ENCODE measurements at regions of chr6 and their contacts with region 1.

Region 1: DNA sequence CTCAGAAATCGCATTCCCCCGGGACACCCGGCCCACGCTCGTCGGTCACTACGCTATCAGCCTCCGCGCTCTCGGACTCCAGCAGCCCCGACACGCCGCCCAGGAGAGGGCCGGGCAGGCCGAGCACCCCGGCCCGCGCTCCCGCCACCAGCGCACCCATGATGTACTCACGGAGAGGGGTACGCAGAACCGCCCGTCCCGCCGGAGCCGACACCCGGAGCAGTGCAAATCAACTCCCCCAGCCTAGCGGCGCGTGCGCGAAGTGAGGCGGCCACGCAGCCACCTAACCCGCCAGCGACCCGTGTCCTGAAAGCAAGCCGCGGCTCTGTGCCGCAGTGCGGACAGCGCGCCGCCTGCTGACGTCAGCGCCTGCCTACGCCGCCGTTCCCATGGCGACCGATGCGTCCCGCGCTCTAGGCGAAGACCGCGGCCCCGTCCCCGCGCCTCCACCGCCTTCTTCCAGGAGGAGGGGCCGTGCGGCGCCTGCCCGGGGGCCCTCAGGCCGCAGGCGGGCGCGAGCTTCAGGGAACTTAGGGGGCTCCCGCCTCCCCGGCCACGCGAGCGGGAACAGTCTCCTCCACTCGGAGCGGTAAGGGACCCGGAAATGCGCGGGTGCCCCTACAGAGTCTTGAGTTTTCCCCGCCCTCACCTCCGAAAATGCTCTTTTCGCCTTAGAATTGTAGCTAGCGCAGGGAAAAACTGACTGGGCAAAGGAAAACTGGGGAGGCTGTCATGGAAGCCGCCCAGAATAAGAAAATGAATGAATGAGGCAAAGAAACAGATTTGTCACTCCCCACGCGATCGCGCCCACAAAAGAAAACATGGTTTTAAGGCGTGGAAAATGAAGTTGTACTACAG is at the start of gene AHI1:
- DNase-seq: peak; percentile 89
- ATAC-seq: peak; percentile 75
- H3K4me3 Mint-ChIP-seq: no peak within 1 kb of the TSS
- H3K27ac Mint-ChIP-seq: no peak within 1 kb of the TSS
- H3K4me1 Mint-ChIP-seq: peaks cover 11% of the 10 kb centered on the region
- H3K27me3 Mint-ChIP-seq: no peaks in the 10 kb centered on the region
- CTCF ChIP-seq: peak; percentile 19
- total RNA-seq, gene AHI1: 32.1 to 33.3 TPM

Region 2: DNA sequence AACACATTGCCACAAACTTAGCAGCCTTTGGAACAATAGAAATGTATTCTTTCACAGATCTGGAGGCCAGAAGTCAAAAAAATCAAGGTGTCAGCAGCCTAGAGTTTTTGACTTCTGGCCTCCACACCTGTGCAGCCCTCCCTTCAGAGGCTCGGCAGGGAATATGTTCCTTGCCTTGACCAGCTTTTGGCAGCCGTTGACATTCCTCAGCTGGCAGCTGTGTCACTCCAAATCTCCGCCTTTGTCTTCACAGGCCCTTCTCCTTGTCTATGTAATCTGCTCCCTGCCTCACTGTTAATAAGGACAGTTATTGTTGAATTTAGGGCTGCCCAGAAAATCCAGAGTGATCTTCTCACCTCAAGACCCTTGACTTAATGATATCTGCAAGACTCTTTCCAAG is 17.1 kb after region 1 on chr6:
- CTCF ChIA-PET with region 1: no interaction called
- POLR2A ChIA-PET with region 1: no interaction called
- intact Hi-C with region 1: no loop called
- DNase-seq: no peak
- ATAC-seq: no peak
- H3K4me3 Mint-ChIP-seq: no peak overlapping the region
- H3K27ac Mint-ChIP-seq: no peak overlapping the region
- H3K4me1 Mint-ChIP-seq: peaks cover 9% of the 10 kb centered on the region
- H3K27me3 Mint-ChIP-seq: peaks cover 4% of the 10 kb centered on the region
- CTCF ChIP-seq: no peak

Region 3: DNA sequence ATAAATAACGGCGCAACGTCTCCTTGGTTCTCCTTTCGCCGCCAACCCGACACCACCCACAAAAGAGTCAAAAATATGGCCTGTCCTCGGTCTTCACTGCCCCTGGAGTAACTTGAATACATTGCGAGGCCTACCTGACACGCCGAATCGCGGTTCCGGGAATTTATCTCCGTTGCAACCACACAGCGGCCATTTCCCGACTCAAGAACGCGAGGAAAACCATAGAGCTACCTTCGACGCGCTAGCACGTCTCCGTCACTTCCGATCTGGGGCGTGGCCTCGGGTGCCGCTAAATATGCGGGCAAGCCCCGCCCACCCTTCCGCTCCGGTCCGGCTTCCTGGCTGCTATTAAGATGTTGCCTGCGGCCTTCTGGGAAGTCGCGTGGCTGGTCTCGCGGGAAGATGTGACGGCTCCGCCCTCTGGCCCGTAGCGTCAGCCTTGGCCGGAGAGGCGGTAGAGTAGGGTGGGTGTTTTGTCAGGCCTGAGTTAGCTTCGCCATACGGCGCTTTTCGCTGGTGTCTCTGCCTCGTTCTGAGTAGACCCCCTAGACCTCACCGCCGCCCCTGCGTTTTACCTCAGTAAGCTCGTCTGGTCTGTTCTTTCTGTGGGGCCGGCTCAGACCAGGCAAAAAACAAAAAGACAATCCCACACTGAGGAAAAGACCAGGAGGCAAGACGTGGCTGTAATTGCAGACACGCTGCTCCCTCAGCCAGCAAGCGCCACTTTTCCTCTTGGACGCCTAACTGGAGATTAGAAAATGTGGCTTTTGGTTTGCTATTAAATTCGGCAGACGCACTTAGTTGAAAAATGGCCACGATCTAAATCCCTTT is 792.2 kb after region 1 on chr6 and contains the start of gene BCLAF1:
- CTCF ChIA-PET with region 1: no interaction called
- POLR2A ChIA-PET with region 1: interaction called, 19 read pairs
- intact Hi-C with region 1: no loop called
- DNase-seq: peak; percentile 100
- ATAC-seq: peak; percentile 85
- H3K4me3 Mint-ChIP-seq: peak within 1 kb of the TSS; percentile 91
- H3K27ac Mint-ChIP-seq: peak within 1 kb of the TSS; percentile 100
- H3K4me1 Mint-ChIP-seq: peaks cover 37% of the 10 kb centered on the region
- H3K27me3 Mint-ChIP-seq: no peaks in the 10 kb centered on the region
- CTCF ChIP-seq: no peak
- total RNA-seq, gene BCLAF1: 128 to 137 TPM